Heart right ventricle (tissue), 16 donors: ENCODE measurements at regions of chr3 and their contacts with region 1.

Region 1: GRCh38 chr3:187629711-187630110 is 40.5 kb downstream of the SST start:
- DNase-seq: no peak
- ATAC-seq: no peak
- H3K4me3 ChIP-seq: no peak overlapping the region
- H3K27ac ChIP-seq: no peak overlapping the region
- H3K4me1 ChIP-seq: no peaks in the 10 kb centered on the region
- H3K27me3 ChIP-seq: peaks cover 0 to 7% (median 4%) of the 10 kb centered on the region in 7 donors
- CTCF ChIP-seq: no peak

Region 2: DNA sequence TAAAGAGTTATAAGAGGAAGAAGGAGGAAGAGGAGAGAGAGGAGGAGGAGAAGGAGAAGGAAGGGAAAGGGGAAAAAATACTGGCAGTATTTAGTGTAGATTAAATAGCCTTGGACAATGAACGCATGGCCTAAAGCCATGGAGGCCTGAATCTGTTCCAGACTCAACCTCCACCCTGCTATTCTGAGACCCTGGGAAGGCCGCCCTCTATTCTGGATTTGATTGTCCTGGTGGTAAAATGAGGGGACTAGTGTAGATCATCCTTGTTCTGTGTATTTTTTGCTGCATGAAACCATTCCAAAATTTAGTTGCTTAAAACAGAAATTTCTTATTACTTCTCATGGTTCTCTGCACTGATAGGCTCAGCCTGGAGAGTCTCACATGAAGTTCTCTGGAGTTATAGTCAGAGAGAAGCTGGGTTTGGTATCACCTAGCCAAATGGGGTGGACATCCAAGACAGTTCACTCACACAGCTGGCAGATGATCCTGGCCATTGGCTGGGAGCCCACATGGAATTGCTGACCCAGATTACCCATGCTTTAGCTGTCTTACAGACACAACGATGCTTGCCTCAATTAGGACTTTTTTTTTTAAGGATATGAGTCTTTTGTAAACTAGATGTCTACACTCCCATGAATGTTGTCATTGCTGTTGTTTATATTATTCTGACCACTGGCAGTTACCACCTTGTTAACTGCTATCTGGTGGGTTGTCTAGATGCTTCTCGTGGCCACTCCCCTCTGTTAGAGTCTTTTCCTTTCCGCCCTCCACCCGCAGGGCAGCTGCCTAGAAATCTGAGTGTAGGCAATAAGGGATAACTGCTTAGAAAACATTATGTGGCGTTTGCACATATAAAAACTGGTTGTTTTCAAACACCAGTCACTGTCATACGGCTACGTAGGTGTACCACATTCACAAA is 109.4 kb before region 1 on chr3:
- intact Hi-C with region 1: loop called in 1 of 10 experiments (anchors 10 kb)
- DNase-seq: peak; percentile 33 to 70
- ATAC-seq: peak in 6 of 8 donors; percentile 63 to 87 (median 76)
- H3K4me3 ChIP-seq: no peak overlapping the region
- H3K27ac ChIP-seq: peak overlapping the region in 5 of 10 donors; percentile 27 to 56 (median 34)
- H3K4me1 ChIP-seq: peaks cover 0 to 15% (median 0%) of the 10 kb centered on the region in 9 donors
- H3K27me3 ChIP-seq: peaks cover 0 to 2% (median 0%) of the 10 kb centered on the region in 7 donors
- CTCF ChIP-seq: no peak

Region 3: DNA sequence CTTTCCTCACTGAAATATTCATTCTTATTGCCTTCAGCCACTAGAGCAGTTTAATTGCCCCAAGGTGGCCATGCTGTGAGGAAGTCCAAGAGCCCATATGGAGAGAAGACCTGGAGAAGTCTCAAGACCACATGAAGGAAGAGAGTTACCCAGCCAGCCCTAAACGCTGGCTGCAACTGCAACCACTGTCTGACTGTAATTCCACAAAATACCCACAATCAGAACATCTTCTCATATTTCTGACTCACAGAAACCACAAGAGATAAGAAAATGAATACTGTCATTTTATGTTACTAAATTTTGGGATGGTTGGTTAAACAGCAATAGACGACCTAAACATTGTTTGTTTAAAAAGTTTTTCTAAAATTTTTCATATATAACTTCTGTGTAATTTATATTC is 55.2 kb after region 1 on chr3:
- intact Hi-C with region 1: no loop called
- DNase-seq: no peak
- ATAC-seq: no peak
- H3K4me3 ChIP-seq: no peak overlapping the region
- H3K27ac ChIP-seq: no peak overlapping the region
- H3K4me1 ChIP-seq: no peaks in the 10 kb centered on the region
- H3K27me3 ChIP-seq: peaks cover 0 to 4% (median 0%) of the 10 kb centered on the region in 7 donors
- CTCF ChIP-seq: no peak